ENCODE measurements at regions of chr9 and their contacts with region 1.

Region 1: GRCh38 chr9:123544007-123544827 is 188.2 kb downstream of the CRB2 start:
- DNase-seq: no peak
- ATAC-seq: no peak
- H3K4me3 ChIP-seq: no peak overlapping the region
- H3K27ac ChIP-seq: no peak overlapping the region
- H3K4me1 ChIP-seq: no peaks in the 10 kb centered on the region
- H3K27me3 ChIP-seq: no peaks in the 10 kb centered on the region
- CTCF ChIP-seq: peak; percentile 85

Region 2: DNA sequence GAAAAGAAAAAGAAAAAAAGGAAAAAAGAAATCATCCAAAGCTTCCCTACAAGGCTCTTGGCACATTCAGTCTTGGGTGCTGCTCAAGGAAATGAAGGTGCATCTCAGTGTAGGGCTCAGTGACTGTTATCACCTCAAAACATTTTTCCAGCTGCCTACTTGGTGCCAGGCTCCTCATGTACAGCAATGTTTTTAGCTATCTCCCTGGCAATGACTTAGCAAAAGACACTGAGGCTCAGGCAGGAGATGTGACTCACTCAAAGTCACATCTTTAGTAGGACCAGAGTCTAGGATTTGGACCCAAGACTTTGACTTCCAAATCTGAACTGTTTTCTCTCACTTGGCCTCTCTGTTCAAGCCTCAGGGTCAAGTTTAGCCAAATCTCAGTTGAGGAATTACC is 76.0 kb after region 1 on chr9:
- intact Hi-C with region 1: no loop called
- DNase-seq: no peak
- ATAC-seq: no peak
- H3K4me3 ChIP-seq: no peak overlapping the region
- H3K27ac ChIP-seq: no peak overlapping the region
- H3K4me1 ChIP-seq: no peaks in the 10 kb centered on the region
- H3K27me3 ChIP-seq: no peaks in the 10 kb centered on the region
- CTCF ChIP-seq: no peak

Region 3: GRCh38 chr9:123631862-123632261 is 87.6 kb after region 1 on chr9:
- intact Hi-C with region 1: no loop called
- DNase-seq: no peak
- ATAC-seq: no peak
- H3K4me3 ChIP-seq: no peak overlapping the region
- H3K27ac ChIP-seq: no peak overlapping the region
- H3K4me1 ChIP-seq: peaks cover 2% of the 10 kb centered on the region
- H3K27me3 ChIP-seq: no peaks in the 10 kb centered on the region
- CTCF ChIP-seq: no peak

Region 4: GRCh38 chr9:123816817-123817472 is 272.7 kb after region 1 on chr9:
- intact Hi-C with region 1: no loop called
- DNase-seq: no peak
- ATAC-seq: no peak
- H3K4me3 ChIP-seq: no peak overlapping the region
- H3K27ac ChIP-seq: no peak overlapping the region
- H3K4me1 ChIP-seq: no peaks in the 10 kb centered on the region
- H3K27me3 ChIP-seq: no peaks in the 10 kb centered on the region
- CTCF ChIP-seq: no peak

Region 5: GRCh38 chr9:123866497-123866896 is 322.3 kb after region 1 on chr9:
- intact Hi-C with region 1: no loop called
- DNase-seq: no peak
- ATAC-seq: no peak
- H3K4me3 ChIP-seq: no peak overlapping the region
- H3K27ac ChIP-seq: no peak overlapping the region
- H3K4me1 ChIP-seq: peaks cover 9% of the 10 kb centered on the region
- H3K27me3 ChIP-seq: no peaks in the 10 kb centered on the region
- CTCF ChIP-seq: no peak

Region 6: GRCh38 chr9:124040935-124041816 is 497.0 kb after region 1 on chr9:
- intact Hi-C with region 1: loop called (anchors 5 kb)
- DNase-seq: peak; percentile 69
- ATAC-seq: peak; percentile 84
- H3K4me3 ChIP-seq: peak overlapping the region; percentile 32
- H3K27ac ChIP-seq: no peak overlapping the region
- H3K4me1 ChIP-seq: peaks cover 27% of the 10 kb centered on the region
- H3K27me3 ChIP-seq: peaks cover 66% of the 10 kb centered on the region
- CTCF ChIP-seq: peak; percentile 90